Transverse colon (tissue), 4 donors: ENCODE measurements at regions of chr2 and their contacts with region 1.

Region 1: GRCh38 chr2:9941996-9942390 is 9.5 kb upstream of the GRHL1 start:
- DNase-seq: no peak
- H3K4me3 ChIP-seq: no peak overlapping the region
- H3K27ac ChIP-seq: no peak overlapping the region
- H3K4me1 ChIP-seq: peaks cover 0 to 12% (median 5%) of the 10 kb centered on the region in 4 donors
- H3K27me3 ChIP-seq: peaks cover 29% of the 10 kb centered on the region
- CTCF ChIP-seq: no peak
- EP300 ChIP-seq: no peak
- POLR2A ChIP-seq: no peak

Region 2: GRCh38 chr2:9961013-9961412 is 19.0 kb after region 1 on chr2:
- in situ Hi-C with region 1: no loop called
- intact Hi-C with region 1: loop called (anchors 1 kb)
- DNase-seq: no peak
- H3K4me3 ChIP-seq: no peak overlapping the region
- H3K27ac ChIP-seq: no peak overlapping the region
- H3K4me1 ChIP-seq: no peaks in the 10 kb centered on the region
- H3K27me3 ChIP-seq: peaks cover 9% of the 10 kb centered on the region
- CTCF ChIP-seq: no peak
- EP300 ChIP-seq: no peak
- POLR2A ChIP-seq: no peak